ENCODE measurements at regions of chr17 and their contacts with region 1.

Region 1: GRCh38 chr17:64025732-64026294 is 5.4 kb upstream of the ICAM2 start:
- DNase-seq: peak; percentile 51 to 57
- H3K4me3 ChIP-seq: no peak overlapping the region
- H3K27ac ChIP-seq: no peak overlapping the region
- H3K4me1 ChIP-seq: no peaks in the 10 kb centered on the region
- H3K27me3 ChIP-seq: no peaks in the 10 kb centered on the region
- CTCF ChIP-seq: peak; percentile 72 to 83 (median 75)
- POLR2A ChIP-seq: no peak

Region 2: DNA sequence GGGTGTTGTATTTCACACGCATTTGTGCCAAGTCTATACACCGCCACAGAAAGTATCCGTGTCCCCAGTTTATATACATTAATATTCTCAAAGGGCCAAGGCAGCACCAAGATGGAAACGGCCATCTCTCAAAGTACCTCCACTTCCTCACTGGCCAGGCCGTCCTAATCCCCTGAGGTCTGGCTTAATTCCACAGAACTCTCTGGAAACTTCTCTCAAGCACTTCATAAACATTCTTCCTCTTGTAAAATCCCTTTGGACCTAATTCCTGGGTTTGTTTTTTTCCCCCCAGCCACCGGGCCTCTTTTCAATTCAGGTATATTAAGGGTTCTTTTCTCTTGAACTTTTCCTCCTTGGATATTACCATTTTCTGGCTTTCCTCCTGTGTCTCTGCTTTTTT is 109.2 kb after region 1 on chr17:
- intact Hi-C with region 1: loop called (anchors 5 kb)
- DNase-seq: no peak
- H3K4me3 ChIP-seq: no peak overlapping the region
- H3K27ac ChIP-seq: no peak overlapping the region
- H3K4me1 ChIP-seq: peaks cover 0 to 11% of the 10 kb centered on the region in 2 donors
- H3K27me3 ChIP-seq: no peaks in the 10 kb centered on the region
- CTCF ChIP-seq: no peak
- POLR2A ChIP-seq: no peak